Left colon (tissue), 2 donors: ENCODE measurements at regions of chr1 and their contacts with region 1.

Region 1: DNA sequence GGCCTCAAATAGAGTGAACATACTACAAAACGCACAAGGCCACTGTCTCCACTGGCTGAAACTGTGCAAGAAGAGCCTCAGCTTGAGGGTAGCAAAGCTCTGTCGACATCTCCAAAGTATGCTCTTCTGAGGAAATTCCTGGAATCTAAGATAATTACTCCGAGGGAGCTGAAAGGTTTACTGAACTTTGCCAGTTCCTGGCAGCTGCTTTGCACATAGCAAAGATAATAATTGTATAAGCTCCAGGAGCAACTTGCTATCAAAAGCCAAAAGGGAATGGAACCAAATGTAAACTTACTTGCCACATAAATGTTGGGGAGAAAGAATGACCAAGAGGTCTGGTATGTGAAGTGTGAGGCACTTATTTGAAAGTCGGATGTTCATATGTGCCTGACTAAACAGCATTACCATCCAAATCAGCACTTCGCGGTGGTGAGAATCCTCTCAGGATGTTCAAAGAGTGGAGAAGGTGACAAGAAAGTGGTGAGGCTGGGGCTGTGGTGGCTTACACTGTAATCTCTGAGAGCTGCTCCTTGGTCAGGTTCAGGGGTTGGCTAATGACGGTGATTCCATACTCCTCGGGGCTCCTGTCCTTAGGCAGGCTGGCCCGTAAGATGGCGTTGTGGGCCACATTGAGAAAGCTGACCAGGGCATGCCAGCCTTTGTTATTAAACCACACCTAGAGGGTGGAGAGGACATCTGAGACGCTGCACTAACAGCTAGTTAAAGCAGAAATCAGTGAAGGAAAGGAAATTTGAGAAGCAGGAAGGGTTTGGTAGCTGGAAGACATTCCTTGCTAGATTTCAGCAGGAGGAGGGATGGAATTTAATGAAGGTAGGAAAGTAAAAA is 100.0 kb downstream of the ABCA4 start:
- DNase-seq: no peak
- ATAC-seq: no peak

Region 2: DNA sequence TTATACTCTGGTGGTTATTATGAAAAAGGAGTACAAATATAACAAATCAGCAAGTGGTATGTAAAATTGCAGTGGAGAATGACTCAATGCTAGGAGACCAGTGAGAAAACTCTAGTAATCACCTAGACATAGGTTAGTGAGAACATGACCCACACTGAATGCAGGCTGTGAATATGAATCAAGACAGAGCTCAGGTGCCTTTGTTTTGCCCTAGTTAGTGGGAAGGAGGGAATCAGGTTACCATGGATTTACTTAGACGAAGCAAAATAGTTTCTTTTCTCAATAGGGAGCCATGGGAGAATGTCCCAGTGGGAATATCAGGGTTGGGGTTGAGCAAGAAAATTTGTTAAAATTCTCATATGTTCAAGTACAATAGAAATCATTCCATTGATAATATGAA is 101.2 kb before region 1 on chr1:
- intact Hi-C with region 1: loop called in 1 of 2 experiments (anchors 5 kb)
- DNase-seq: no peak
- ATAC-seq: no peak

Region 3: GRCh38 chr1:93988634-93989350 is 32.2 kb before region 1 on chr1:
- intact Hi-C with region 1: no loop called
- DNase-seq: no peak
- ATAC-seq: no peak